Mammary epithelial cell (primary cell): ENCODE measurements at regions of chr6 and their contacts with region 1.

Region 1: GRCh38 chr6:24574809-24575208 is 71.2 kb downstream of the KIAA0319 start:
- DNase-seq: peak; percentile 34
- H3K4me3 ChIP-seq: no peak overlapping the region
- H3K27ac ChIP-seq: no peak overlapping the region
- H3K4me1 ChIP-seq: no peaks in the 10 kb centered on the region
- H3K27me3 ChIP-seq: no peaks in the 10 kb centered on the region
- CTCF ChIP-seq: no peak

Region 2: DNA sequence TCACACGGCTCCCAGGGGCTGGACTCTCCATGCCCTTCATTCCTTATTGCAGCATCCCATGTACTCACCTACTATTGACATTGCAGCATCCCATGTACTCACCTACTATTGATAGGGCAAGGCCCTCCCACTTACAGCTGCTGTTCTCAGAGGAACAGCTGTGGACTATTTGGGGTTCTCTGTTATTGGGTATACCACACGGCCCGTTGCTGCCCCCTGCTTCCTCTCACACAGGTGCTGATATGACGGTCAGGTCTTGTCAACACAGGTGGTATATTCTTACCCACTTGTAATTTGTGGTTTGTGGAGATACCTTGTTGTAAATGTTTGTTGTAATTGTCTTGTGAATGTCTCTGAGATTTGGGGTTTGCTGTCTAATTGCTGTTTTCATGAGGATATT is 61.2 kb before region 1 on chr6:
- CTCF ChIA-PET with region 1: no interaction called
- dilution Hi-C with region 1: no loop called
- in situ Hi-C with region 1: no loop called
- intact Hi-C with region 1: no loop called
- DNase-seq: no peak
- H3K4me3 ChIP-seq: no peak overlapping the region
- H3K27ac ChIP-seq: no peak overlapping the region
- H3K4me1 ChIP-seq: no peaks in the 10 kb centered on the region
- H3K27me3 ChIP-seq: no peaks in the 10 kb centered on the region
- CTCF ChIP-seq: no peak

Region 3: GRCh38 chr6:24529985-24530384 is 44.8 kb before region 1 on chr6:
- CTCF ChIA-PET with region 1: no interaction called
- dilution Hi-C with region 1: loop called (anchors 5 kb)
- in situ Hi-C with region 1: no loop called
- intact Hi-C with region 1: no loop called
- DNase-seq: no peak
- H3K4me3 ChIP-seq: no peak overlapping the region
- H3K27ac ChIP-seq: no peak overlapping the region
- H3K4me1 ChIP-seq: no peaks in the 10 kb centered on the region
- H3K27me3 ChIP-seq: no peaks in the 10 kb centered on the region
- CTCF ChIP-seq: no peak

Region 4: GRCh38 chr6:24646782-24647181 is 72.0 kb after region 1 on chr6:
- CTCF ChIA-PET with region 1: no interaction called
- dilution Hi-C with region 1: loop called (anchors 5 kb)
- in situ Hi-C with region 1: no loop called
- intact Hi-C with region 1: no loop called
- DNase-seq: peak; percentile 51
- H3K4me3 ChIP-seq: no peak overlapping the region
- H3K27ac ChIP-seq: no peak overlapping the region
- H3K4me1 ChIP-seq: peaks cover 13% of the 10 kb centered on the region
- H3K27me3 ChIP-seq: no peaks in the 10 kb centered on the region
- CTCF ChIP-seq: no peak